ENCODE measurements at regions of chr5 and their contacts with region 1.

Region 1: DNA sequence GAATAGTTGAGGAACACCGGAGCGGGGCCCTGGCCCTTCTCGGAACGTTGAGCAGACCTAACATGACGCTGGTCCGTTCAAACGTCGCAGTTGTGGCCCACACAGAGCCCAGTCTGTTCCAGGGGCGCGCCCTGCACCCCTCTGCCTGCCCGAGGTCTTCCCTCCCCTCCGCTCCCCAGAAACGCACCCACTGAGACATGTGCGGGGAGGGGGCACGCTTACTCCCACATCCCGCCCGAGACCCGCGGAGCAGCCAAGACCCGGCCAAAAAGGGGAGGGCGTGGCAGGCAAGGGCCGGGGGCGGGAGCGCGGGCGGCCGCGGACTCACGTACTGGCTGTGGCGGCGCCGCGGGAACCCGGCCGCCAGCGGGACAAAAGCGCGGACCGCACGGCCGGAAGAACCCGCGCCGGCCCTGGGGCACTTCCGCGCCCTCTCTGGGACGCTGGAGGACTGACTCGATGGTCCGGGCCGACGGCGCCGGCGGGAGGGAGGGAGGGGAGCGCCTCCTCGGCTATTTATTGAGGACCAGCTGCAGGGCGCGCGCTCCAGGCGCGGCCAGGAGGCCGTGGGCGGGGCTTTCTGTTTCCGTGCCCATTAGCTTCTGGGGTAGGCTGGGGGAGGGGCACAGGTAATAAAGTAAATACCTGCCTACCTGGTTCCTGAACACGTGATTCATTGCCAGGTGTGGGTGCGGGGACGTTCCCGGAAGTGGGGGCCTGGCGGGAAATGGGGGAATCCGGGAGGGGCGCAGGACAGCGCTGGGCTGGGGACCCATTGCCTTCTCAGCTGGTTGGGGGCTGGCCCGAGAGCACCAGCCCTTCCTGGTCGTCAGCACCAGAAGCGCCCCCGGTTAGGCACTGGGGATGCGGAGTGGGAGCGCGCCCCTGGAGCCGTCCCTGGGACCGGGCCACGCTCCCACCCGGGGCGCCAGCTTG is at the start of gene ZFP62:
- DNase-seq: peak; percentile 96 to 98 (median 97)
- ATAC-seq: peak; percentile 94
- H3K4me3 ChIP-seq: peak within 1 kb of the TSS; percentile 60
- H3K4me1 ChIP-seq: peaks cover 23% of the 10 kb centered on the region
- CTCF ChIP-seq: no peak
- total RNA-seq, gene ZFP62: 37.3 to 41.5 (median 40.2) TPM

Region 2: DNA sequence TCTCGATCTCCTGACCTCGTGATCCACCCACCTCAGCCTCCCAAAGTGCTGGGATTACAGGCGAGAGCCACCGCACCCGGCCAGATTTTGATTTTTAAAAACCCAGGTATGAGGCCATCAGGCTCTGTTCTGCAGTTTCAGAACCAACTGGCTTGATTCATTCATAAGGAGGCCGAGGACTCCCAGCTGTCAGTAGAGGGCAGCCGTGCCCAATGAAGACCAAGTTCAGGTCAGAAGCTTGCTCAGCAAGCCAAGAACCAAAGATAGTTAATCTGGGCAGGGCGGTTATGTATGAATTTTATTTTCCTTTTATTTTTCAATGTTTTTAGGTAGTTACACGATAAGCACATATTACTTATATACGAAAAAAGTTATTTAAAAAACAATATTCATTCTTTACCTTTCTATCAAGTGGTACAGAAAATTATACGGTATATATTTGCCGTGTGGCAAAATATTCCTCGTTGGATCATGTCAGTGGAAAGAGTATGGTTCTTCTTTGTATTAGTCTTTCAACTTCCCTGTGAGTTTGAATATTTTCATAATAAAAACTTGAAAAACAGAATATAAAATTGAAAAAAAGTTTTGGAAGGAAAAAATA is 76.6 kb before region 1 on chr5:
- intact Hi-C with region 1: loop called in 1 of 2 experiments (anchors 10 kb)
- DNase-seq: peak in 2 of 3 donors; percentile 84 to 87
- ATAC-seq: peak; percentile 83
- H3K4me3 ChIP-seq: no peak overlapping the region
- H3K4me1 ChIP-seq: peaks cover 5% of the 10 kb centered on the region
- CTCF ChIP-seq: peak; percentile 49

Region 3: GRCh38 chr5:180809403-180810209 is 51.5 kb before region 1 on chr5:
- intact Hi-C with region 1: loop called in 1 of 2 experiments (anchors 10 kb)
- DNase-seq: peak in 2 of 3 donors; percentile 91 to 92
- ATAC-seq: peak; percentile 87
- H3K4me3 ChIP-seq: peak overlapping the region; percentile 23
- H3K4me1 ChIP-seq: peaks cover 51% of the 10 kb centered on the region
- CTCF ChIP-seq: no peak